Keratinocyte (primary cell): ENCODE measurements at regions of chr3 and their contacts with region 1.

Region 1: DNA sequence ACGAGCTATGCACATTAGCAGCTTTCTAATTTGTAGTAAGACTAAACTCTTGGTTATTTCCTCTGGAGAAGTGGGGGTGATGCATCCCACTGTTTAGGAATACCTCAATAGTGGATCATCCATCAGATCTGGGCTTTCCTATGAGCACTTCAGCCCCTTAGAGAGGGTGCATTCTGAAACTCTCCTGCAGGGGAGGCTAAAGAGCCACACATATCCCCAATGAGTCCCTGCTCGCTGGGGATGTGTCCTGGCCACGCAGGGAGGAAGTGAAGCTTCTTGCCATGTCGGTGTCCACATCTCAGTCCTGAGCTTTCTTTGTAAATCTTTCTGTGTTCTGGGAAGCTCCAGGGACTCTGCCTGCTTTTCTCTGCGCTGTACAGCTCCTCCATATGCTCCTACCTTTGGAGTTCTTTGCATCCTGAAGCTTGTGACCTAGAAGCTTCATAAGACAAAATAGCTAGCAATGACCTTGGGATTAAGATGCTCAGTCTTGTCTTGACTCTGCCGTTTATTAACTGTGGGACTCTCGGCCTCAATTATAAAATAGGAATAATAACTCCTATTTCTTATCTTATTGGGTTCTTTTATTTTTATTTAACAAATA is 28.3 kb upstream of the MASP1 start:
- DNase-seq: peak; percentile 15
- H3K4me3 ChIP-seq: no peak overlapping the region
- H3K27ac ChIP-seq: no peak overlapping the region
- H3K4me1 ChIP-seq: peaks cover 6% of the 10 kb centered on the region
- H3K27me3 ChIP-seq: peaks cover 18% of the 10 kb centered on the region
- CTCF ChIP-seq: peak; percentile 76 to 96 (median 87)

Region 2: DNA sequence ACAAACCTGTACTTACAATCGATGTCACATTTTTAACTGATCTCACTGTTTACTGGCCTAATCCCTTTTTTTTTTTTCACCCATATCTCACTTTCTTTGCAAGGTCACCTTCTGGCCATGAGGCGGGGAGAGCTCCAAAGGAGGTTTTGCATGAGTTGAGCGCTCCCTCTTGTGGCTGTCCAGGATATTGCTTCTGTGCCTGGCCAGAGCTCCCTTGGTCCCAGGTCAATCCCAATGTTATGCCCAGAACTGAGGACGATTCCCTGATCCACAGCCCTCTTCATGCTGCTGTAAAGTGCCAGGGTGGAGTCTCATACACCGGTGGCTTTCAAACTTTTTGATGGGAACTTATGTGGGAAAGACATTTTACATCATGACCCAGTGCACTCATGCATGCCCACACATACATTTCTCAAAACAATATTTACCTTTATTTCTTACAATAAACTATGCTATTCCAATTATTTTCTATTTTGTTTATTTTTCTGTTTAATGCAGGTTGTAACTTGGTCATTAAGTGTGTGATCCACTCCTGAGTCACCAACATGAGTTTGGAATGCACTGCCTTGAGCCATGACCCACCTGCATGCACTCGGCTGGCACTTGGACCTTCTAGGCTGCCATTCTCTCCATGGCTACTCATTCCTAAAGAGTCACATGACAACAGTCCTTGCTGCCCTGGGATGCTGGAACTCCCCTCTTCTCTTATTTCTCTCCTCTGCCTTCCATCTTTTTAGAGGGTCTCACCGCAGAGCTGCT is 360.0 kb after region 1 on chr3:
- dilution Hi-C with region 1: loop called (anchors 25 kb)
- DNase-seq: peak; percentile 41
- H3K4me3 ChIP-seq: no peak overlapping the region
- H3K27ac ChIP-seq: no peak overlapping the region
- H3K4me1 ChIP-seq: no peaks in the 10 kb centered on the region
- H3K27me3 ChIP-seq: peaks cover 4% of the 10 kb centered on the region
- CTCF ChIP-seq: peak; percentile 86 to 95 (median 91)